Gastrocnemius medialis (tissue), 4 donors: ENCODE measurements at regions of chr10 and their contacts with region 1.

Region 1: DNA sequence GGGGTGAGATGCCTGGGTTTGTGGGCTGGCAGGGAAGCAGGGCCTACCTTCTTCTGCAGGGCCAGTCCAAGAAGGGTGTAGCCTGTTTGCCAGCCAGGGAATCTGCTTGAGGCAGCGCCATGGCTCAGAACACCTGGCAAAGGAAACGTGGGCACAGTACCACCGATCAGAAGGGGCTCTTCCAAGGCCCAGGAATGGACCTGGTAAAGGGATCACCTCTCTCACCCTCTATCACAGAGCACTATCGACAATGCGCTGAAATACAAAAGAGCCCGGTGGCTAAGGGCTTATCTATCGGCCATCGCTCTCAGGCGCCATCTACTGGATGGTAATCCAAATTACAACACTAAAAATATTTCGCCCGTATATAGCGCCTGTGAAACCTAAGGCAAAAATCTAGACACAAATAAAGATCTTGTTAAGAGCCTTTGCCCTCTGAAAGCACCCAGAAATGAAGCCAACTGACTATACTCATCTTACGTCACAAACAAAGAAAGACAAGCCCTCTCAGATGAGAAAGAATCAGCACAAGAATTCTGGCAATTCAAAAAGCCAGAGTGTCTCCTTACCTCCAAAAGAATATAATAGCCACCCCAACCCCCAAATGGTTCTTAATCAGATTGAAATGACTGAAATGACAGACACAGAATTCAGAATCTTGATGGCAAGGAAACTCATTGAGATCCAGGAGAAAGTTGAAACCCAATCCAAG is 217.8 kb upstream of the HPS1 start:
- DNase-seq: peak in 1 of 2 donors; percentile 11
- ATAC-seq: no peak
- H3K4me3 ChIP-seq: no peak overlapping the region
- H3K27ac ChIP-seq: no peak overlapping the region
- H3K4me1 ChIP-seq: no peaks in the 10 kb centered on the region
- H3K27me3 ChIP-seq: no peaks in the 10 kb centered on the region
- CTCF ChIP-seq: peak; percentile 25 to 65 (median 60)
- POLR2A ChIP-seq: no peak

Region 2: GRCh38 chr10:98467506-98468346 is 196.8 kb before region 1 on chr10:
- in situ Hi-C with region 1: loop called (anchors 5 to 10 kb)
- intact Hi-C with region 1: loop called (anchors 1 kb)
- DNase-seq: peak; percentile 59 to 68
- ATAC-seq: peak; percentile 98 to 99
- H3K4me3 ChIP-seq: peak overlapping the region; percentile 46 to 79 (median 62)
- H3K27ac ChIP-seq: no peak overlapping the region
- H3K4me1 ChIP-seq: no peaks in the 10 kb centered on the region
- H3K27me3 ChIP-seq: peaks cover 0 to 4% (median 0%) of the 10 kb centered on the region in 3 donors
- CTCF ChIP-seq: peak; percentile 68 to 88 (median 78)
- POLR2A ChIP-seq: no peak

Region 3: DNA sequence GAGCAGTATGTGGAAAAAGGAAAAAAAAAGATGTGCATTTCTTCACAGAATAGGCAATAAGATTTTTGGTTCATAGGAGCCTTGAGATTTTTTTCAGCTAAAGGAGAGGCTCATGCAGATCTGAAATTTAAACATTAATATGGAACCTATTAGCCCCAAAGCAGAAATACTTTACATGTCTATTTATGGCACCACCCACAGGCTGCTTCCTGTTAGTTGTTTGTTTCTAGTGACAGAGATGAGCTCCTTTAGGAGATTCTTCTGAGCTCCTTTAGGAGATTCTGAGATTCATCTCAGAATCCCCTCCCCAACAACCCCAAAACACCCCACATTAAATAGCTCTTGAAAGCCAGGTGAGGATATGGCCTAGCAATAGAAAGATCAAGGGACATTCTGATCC is 189.9 kb before region 1 on chr10:
- in situ Hi-C with region 1: loop called (anchors 5 to 10 kb)
- intact Hi-C with region 1: no loop called
- DNase-seq: no peak
- ATAC-seq: no peak
- H3K4me3 ChIP-seq: no peak overlapping the region
- H3K27ac ChIP-seq: no peak overlapping the region
- H3K4me1 ChIP-seq: no peaks in the 10 kb centered on the region
- H3K27me3 ChIP-seq: no peaks in the 10 kb centered on the region
- CTCF ChIP-seq: no peak
- POLR2A ChIP-seq: no peak

Region 4: DNA sequence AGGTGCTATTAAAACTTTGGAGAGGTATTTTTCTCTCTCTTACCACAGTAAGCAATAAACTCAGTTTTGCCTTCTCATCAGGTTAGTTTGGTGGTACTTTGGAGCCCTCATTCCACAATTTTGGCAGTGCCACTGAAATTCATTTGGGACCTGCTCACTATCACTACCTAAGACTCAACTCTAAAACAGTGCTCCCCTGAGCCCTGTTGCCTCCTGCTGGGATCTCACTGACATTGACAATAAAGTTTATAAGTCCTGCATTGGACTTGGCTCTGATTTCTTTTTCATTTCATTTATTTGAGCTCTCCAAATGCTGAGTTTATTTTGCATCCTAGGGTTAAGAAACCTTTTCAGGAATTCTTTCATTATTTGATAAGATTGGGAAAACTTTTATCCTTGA is 86.9 kb before region 1 on chr10:
- in situ Hi-C with region 1: no loop called
- intact Hi-C with region 1: no loop called
- DNase-seq: no peak
- ATAC-seq: no peak
- H3K4me3 ChIP-seq: no peak overlapping the region
- H3K27ac ChIP-seq: no peak overlapping the region
- H3K4me1 ChIP-seq: no peaks in the 10 kb centered on the region
- H3K27me3 ChIP-seq: no peaks in the 10 kb centered on the region
- CTCF ChIP-seq: no peak
- POLR2A ChIP-seq: no peak

Region 5: DNA sequence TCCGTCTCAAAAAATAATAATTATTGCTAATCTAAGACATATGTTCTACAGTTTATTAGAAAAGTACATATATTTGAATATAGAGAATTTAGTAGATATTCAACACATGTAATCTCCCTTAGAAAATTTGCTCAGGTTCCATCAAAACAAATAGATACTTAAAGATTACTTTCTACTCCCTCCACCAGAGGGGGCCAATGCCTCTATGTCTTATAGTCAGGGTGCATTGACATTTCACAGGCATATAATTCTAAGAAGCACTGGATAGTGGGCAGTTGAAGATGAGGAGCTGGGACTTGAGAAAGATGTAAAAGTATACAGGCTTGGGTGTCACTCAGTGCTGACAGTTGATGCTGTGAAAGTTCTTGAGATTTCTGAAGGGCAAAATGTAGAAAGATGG is 83.8 kb after region 1 on chr10:
- in situ Hi-C with region 1: no loop called
- intact Hi-C with region 1: no loop called
- DNase-seq: no peak
- ATAC-seq: no peak
- H3K4me3 ChIP-seq: no peak overlapping the region
- H3K27ac ChIP-seq: no peak overlapping the region
- H3K4me1 ChIP-seq: no peaks in the 10 kb centered on the region
- H3K27me3 ChIP-seq: no peaks in the 10 kb centered on the region
- CTCF ChIP-seq: no peak
- POLR2A ChIP-seq: no peak

Region 6: GRCh38 chr10:98778277-98778759 is 113.8 kb after region 1 on chr10:
- in situ Hi-C with region 1: no loop called
- intact Hi-C with region 1: no loop called
- DNase-seq: no peak
- ATAC-seq: no peak
- H3K4me3 ChIP-seq: no peak overlapping the region
- H3K27ac ChIP-seq: no peak overlapping the region
- H3K4me1 ChIP-seq: no peaks in the 10 kb centered on the region
- H3K27me3 ChIP-seq: no peaks in the 10 kb centered on the region
- CTCF ChIP-seq: no peak
- POLR2A ChIP-seq: no peak